Panc1 (cell line): ENCODE measurements at regions of chr19 and their contacts with region 1.

Region 1: GRCh38 chr19:39833464-39834286 is at the start of gene DYRK1B:
- DNase-seq: peak; percentile 100
- ATAC-seq: peak; percentile 94
- H3K4me3 ChIP-seq: peak within 1 kb of the TSS; percentile 36 to 57
- H3K27ac ChIP-seq: peak within 1 kb of the TSS; percentile 76
- H3K4me1 ChIP-seq: peaks cover 26% of the 10 kb centered on the region
- H3K27me3 ChIP-seq: no peaks in the 10 kb centered on the region
- CTCF ChIP-seq: no peak
- total RNA-seq, gene DYRK1B: 322 TPM

Region 2: DNA sequence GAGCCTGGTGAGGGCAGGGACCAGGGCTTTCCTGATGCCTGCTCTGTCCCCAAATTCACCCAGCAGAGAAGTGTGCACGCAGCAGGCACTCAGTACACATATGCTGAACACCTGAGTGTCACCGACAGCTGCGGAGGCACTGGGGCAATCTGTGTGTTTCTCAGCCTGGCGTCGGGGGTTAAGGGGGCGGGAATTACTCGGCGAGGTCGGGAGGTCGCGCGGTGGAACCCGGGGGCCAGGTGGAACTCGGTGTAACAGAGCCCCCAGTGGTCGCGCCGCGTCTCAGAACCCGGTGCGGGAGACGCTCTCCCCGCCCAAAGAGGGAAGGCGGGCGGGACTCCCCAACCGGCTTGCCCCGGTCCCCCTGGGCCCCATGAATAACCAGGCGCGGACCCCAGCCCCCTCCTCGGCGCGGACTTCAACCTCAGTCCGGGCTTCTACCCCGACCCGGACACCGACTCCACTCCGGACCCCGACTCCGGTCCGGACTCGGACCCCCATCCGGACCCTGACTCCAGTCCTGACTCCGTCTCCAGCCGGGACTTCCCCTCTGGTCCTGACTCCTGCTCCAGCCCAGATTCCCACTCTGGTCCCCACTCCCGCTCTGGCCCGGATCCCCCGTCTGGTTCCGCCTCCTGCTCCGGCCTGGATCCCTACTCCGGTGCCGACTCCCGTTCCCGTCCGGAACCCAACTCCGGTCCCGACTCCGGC is 318.7 kb before region 1 on chr19 and contains the start of gene SELENOV:
- CTCF ChIA-PET with region 1: interaction called, 3 read pairs
- POLR2A ChIA-PET with region 1: interaction called, 10 read pairs
- in situ Hi-C with region 1: no loop called
- intact Hi-C with region 1: no loop called
- DNase-seq: no peak
- ATAC-seq: peak; percentile 56
- H3K4me3 ChIP-seq: peak within 1 kb of the TSS; percentile 30 to 55
- H3K27ac ChIP-seq: peak within 1 kb of the TSS; percentile 5
- H3K4me1 ChIP-seq: peaks cover 26% of the 10 kb centered on the region
- H3K27me3 ChIP-seq: peaks cover 23% of the 10 kb centered on the region
- CTCF ChIP-seq: no peak
- total RNA-seq, gene SELENOV: 0.80 TPM

Region 3: GRCh38 chr19:39778763-39779162 is 54.9 kb before region 1 on chr19 and contains the start of gene LEUTX:
- CTCF ChIA-PET with region 1: interaction called, 6 read pairs
- POLR2A ChIA-PET with region 1: interaction called, 22 read pairs
- in situ Hi-C with region 1: no loop called
- intact Hi-C with region 1: no loop called
- DNase-seq: no peak
- ATAC-seq: no peak
- H3K4me3 ChIP-seq: no peak within 1 kb of the TSS
- H3K27ac ChIP-seq: no peak within 1 kb of the TSS
- H3K4me1 ChIP-seq: no peaks in the 10 kb centered on the region
- H3K27me3 ChIP-seq: peaks cover 86% of the 10 kb centered on the region
- CTCF ChIP-seq: no peak
- total RNA-seq, gene LEUTX: not detected

Region 4: GRCh38 chr19:39818626-39819097 is 15.0 kb before region 1 on chr19:
- CTCF ChIA-PET with region 1: interaction called, 8 read pairs
- POLR2A ChIA-PET with region 1: interaction called, 82 read pairs
- in situ Hi-C with region 1: no loop called
- intact Hi-C with region 1: no loop called
- DNase-seq: no peak
- ATAC-seq: 0 out of 2 replicates have a peak, but pooled peaks have one; percentile 0
- H3K4me3 ChIP-seq: no peak overlapping the region
- H3K27ac ChIP-seq: no peak overlapping the region
- H3K4me1 ChIP-seq: peaks cover 4% of the 10 kb centered on the region
- H3K27me3 ChIP-seq: no peaks in the 10 kb centered on the region
- CTCF ChIP-seq: no peak

Region 5: DNA sequence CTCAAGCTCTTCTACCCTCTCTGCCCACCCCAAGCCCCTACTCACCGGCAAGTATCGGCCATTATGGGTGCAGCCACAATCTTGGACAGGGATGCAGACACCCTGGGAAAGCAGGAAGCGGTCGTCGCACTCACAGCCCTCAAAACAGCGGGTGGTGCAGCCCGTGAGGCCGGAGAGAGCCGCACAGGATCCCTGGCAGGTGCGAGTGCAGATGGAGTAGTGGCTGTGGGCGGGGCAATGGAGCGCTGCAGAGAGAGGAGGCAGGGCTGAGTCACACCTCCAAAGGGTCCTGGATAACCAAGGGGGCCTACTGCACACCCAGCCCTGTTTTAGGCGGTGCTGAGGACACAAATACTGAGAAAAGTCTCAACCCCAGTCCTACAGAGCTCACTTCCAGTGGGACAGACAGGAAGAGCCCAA is 36.5 kb after region 1 on chr19:
- CTCF ChIA-PET with region 1: interaction called, 10 read pairs
- POLR2A ChIA-PET with region 1: interaction called, 15 read pairs
- in situ Hi-C with region 1: no loop called
- intact Hi-C with region 1: no loop called
- DNase-seq: no peak
- ATAC-seq: 0 out of 2 replicates have a peak, but pooled peaks have one; percentile 0
- H3K4me3 ChIP-seq: no peak overlapping the region
- H3K27ac ChIP-seq: no peak overlapping the region
- H3K4me1 ChIP-seq: no peaks in the 10 kb centered on the region
- H3K27me3 ChIP-seq: peaks cover 12% of the 10 kb centered on the region; the same call in 1 of the 2 replicates
- CTCF ChIP-seq: no peak

Region 6: DNA sequence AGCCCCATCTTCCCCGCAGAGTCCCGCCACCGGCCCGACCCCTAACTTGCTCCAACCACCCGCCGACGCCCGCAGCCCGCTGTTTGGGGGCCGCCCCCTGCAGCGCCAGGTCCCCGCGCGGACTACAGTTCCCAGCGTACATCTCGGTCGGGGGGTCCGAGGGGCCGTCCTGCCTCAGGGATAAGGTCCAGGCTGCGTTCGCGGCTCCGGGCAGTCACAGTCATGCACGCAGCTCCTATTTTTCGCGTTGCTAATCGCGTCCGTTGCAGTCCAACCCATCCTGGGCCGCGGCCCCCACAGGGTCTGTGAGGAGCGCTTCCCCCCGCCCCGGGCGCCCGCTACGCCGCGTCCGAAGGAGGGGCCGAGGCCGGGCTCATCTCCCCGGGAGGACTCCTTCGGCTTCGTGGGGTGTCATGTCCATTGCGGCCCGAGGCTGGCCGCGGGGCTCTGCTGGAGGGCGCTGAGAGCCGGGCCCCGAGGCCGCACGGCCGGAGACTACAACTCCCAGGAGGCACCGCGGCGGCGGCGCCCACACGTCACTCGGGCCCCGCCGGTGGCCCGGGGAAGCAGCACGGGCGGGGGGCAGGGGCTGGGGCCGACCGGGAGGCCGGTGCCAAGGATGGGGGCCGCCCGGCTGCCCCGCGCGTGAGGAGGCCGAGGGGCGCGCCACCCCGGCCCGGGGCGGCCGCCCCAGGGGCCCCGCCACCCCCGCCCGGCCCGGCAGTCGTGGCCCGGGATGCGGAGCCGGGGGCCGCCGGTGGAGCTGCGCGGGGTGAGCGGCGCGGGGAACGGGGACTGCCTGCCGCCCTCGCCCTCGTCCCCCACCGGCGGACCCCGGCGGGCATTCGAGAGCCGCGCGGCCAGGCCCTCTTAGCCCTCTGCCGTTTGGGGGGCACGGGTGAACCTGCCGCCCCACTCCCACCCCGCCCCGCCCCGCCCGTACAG is 357.5 kb after region 1 on chr19 and contains the start of gene MAP3K10:
- CTCF ChIA-PET with region 1: no interaction called
- POLR2A ChIA-PET with region 1: interaction called, 13 read pairs
- in situ Hi-C with region 1: no loop called
- intact Hi-C with region 1: no loop called
- DNase-seq: peak; percentile 99
- ATAC-seq: peak; percentile 97
- H3K4me3 ChIP-seq: peak within 1 kb of the TSS; percentile 36 to 57
- H3K27ac ChIP-seq: peak within 1 kb of the TSS; percentile 49
- H3K4me1 ChIP-seq: peaks cover 23% of the 10 kb centered on the region
- H3K27me3 ChIP-seq: peaks cover 9% of the 10 kb centered on the region
- CTCF ChIP-seq: no peak
- total RNA-seq, gene MAP3K10: 255 TPM